ENCODE measurements at regions of chr2 and their contacts with region 1.

Region 1: GRCh38 chr2:134411828-134412638 is 158.2 kb downstream of the MGAT5 start:
- DNase-seq: peak; percentile 73
- H3K4me3 ChIP-seq: no peak overlapping the region
- H3K27ac ChIP-seq: peak overlapping the region; percentile 56
- H3K4me1 ChIP-seq: peaks cover 45% of the 10 kb centered on the region
- H3K27me3 ChIP-seq: no peaks in the 10 kb centered on the region
- CTCF ChIP-seq: peak; percentile 61 to 77
- POLR2A ChIP-seq: no peak

Region 2: DNA sequence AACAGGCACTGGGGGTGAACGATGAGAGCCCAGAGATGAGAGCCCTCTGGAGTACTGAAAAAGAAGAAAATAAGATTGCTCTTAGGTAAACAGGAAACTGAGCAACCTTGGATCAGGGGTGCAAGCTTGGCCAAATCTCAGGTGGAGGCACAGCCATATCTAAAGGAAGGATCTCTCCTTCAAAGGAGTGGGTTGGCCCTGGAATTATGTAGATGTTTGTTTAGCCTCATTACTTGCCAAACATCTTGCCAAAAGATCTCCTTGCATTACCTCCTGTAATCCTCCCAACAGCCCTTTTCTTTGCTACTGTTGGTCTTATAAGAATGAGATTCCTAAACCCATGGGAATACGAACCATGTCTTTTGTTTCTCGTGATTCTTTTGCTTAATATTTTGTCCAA is 511.1 kb before region 1 on chr2:
- CTCF ChIA-PET with region 1: no interaction called
- POLR2A ChIA-PET with region 1: no interaction called
- dilution Hi-C with region 1: no loop called
- intact Hi-C with region 1: loop called (anchors 5 kb)
- DNase-seq: no peak
- H3K4me3 ChIP-seq: no peak overlapping the region
- H3K27ac ChIP-seq: no peak overlapping the region
- H3K4me1 ChIP-seq: no peaks in the 10 kb centered on the region
- H3K27me3 ChIP-seq: peaks cover 5 to 24% of the 10 kb centered on the region in 2 experiments
- CTCF ChIP-seq: no peak
- POLR2A ChIP-seq: no peak

Region 3: DNA sequence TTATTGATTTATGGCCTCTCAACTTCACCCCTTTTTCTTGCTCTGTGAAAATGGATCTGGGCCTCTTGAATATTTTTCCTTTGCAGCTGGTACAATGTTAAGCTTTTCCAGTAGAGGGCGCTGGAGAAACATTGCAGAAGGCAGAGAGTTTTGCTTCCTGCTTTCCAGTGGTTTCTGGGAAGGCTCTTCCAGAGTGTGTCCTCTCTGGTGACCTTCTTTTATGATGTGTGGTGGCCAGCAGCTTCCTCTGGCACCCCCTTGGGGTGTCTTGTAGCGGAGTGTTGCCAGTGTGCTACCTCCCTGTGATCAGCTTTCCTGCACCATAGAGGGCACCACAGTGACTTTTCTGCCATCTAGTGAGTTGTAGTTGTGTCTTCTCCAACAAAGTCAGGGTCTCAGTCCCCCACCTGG is 183.5 kb before region 1 on chr2:
- CTCF ChIA-PET with region 1: interaction called, 5 read pairs
- POLR2A ChIA-PET with region 1: no interaction called
- dilution Hi-C with region 1: no loop called
- intact Hi-C with region 1: loop called (anchors 5 kb)
- DNase-seq: no peak
- H3K4me3 ChIP-seq: no peak overlapping the region
- H3K27ac ChIP-seq: no peak overlapping the region
- H3K4me1 ChIP-seq: no peaks in the 10 kb centered on the region
- H3K27me3 ChIP-seq: no peaks in the 10 kb centered on the region
- CTCF ChIP-seq: peak; percentile 35 to 40
- POLR2A ChIP-seq: no peak

Region 4: DNA sequence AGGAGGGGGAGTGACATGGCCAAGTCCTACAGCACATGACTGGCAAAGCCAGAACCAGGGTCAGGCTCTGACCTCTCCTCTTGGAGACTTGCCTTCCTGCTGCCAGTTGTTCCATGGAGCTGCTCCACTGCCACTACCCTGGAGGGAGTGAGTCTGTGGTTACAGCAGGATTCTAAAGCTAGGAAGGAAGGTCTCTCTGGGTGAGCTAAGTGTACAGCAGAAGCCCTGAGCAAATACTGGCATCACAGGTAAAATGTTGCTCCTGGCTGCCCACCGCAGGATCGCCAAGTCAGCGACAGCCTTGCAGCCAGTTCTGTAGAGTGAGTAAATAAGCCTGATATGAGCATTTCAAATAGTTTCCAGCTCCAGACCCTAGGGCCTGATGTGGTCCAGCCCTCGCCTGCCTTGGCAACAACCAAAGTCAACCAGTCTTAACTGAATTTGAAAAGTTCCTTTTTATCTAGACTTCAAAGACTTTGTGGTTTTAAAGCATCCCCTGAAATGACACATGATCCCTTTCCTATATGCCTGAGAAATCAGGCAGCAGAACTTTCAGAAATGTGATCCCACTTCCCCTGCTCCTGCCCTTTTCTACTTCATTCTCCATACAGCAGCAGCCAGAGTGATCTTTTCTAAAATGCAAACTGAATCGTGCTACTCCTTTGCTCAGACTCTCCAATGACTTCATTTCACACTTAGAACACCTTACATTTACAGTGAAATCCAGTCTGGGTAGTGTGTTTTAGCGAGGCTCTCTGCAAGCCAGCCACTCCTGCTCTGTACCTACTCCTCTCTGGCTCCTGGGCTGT is 43.8 kb before region 1 on chr2:
- CTCF ChIA-PET with region 1: interaction called, 13 read pairs
- POLR2A ChIA-PET with region 1: no interaction called
- dilution Hi-C with region 1: no loop called
- intact Hi-C with region 1: no loop called
- DNase-seq: peak; percentile 14
- H3K4me3 ChIP-seq: no peak overlapping the region
- H3K27ac ChIP-seq: no peak overlapping the region
- H3K4me1 ChIP-seq: peaks cover 3% of the 10 kb centered on the region
- H3K27me3 ChIP-seq: no peaks in the 10 kb centered on the region
- CTCF ChIP-seq: no peak
- POLR2A ChIP-seq: no peak

Region 5: GRCh38 chr2:134391751-134392160 is 20.3 kb before region 1 on chr2:
- CTCF ChIA-PET with region 1: interaction called, 98 read pairs
- POLR2A ChIA-PET with region 1: no interaction called
- dilution Hi-C with region 1: no loop called
- intact Hi-C with region 1: no loop called
- DNase-seq: no peak
- H3K4me3 ChIP-seq: no peak overlapping the region
- H3K27ac ChIP-seq: no peak overlapping the region
- H3K4me1 ChIP-seq: no peaks in the 10 kb centered on the region
- H3K27me3 ChIP-seq: no peaks in the 10 kb centered on the region
- CTCF ChIP-seq: no peak
- POLR2A ChIP-seq: no peak

Region 6: GRCh38 chr2:134441153-134441863 is 29.3 kb after region 1 on chr2:
- CTCF ChIA-PET with region 1: interaction called, 22 read pairs
- POLR2A ChIA-PET with region 1: no interaction called
- dilution Hi-C with region 1: no loop called
- intact Hi-C with region 1: loop called (anchors 1 kb)
- DNase-seq: no peak
- H3K4me3 ChIP-seq: no peak overlapping the region
- H3K27ac ChIP-seq: no peak overlapping the region
- H3K4me1 ChIP-seq: peaks cover 45% of the 10 kb centered on the region
- H3K27me3 ChIP-seq: no peaks in the 10 kb centered on the region
- CTCF ChIP-seq: no peak
- POLR2A ChIP-seq: no peak